ENCODE measurements at regions of chr16 and their contacts with region 1.

Region 1: GRCh38 chr16:11407047-11407982 is 62.1 kb downstream of the RMI2 start:
- DNase-seq: peak; percentile 86
- CTCF ChIP-seq: peak; percentile 81

Region 2: GRCh38 chr16:11692651-11693050 is 285.3 kb after region 1 on chr16:
- in situ Hi-C with region 1: no loop called
- DNase-seq: no peak
- CTCF ChIP-seq: no peak

Region 3: GRCh38 chr16:11706180-11706742 is 298.9 kb after region 1 on chr16:
- in situ Hi-C with region 1: loop called (anchors 25 kb)
- DNase-seq: peak; percentile 21
- CTCF ChIP-seq: no peak